ENCODE measurements at regions of chrX and their contacts with region 1.

Region 1: GRCh38 chrX:84729809-84730208 is 227.6 kb upstream of the HDX start:
- DNase-seq: no peak
- ATAC-seq: peak; percentile 80

Region 2: DNA sequence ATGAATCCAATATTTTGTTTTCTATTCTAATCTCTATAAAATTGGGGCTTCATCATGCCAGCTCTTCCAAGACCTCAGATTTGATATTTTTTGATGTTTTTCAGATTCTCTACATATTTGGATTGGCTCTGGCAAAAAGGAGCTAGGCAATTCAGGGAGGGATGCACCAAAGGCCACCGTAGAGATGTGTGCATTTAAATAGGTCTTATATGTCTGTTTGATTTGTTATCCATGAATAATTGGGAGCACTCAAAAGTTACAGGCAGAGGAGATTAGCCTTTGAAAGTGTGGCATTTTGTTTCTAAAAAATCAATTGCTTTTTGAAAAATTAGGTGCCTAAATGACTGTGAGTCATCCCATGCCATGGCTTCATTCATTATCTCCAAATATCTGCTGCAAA is 394.7 kb before region 1 on chrX:
- intact Hi-C with region 1: no loop called
- DNase-seq: no peak
- ATAC-seq: no peak

Region 3: DNA sequence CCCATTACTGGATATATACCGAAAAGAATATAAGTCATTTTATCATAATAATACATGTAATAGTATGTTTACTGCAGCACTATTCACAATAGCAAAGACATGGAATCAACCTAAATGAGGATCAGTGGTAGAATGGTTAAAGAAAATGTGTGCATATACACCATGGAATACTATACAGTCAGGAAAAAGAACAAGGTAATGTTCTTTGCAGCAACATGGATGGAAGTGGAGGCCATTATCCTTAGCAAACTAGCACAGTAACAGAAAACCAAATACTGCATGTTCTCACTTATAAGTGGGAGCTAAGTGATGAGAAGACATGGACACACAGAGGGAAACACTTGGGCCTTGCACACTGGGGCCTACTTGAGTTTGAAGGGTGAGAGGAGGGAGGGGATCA is 66.5 kb after region 1 on chrX:
- intact Hi-C with region 1: no loop called
- DNase-seq: no peak
- ATAC-seq: no peak

Region 4: GRCh38 chrX:84907324-84907968 is 177.6 kb after region 1 on chrX:
- intact Hi-C with region 1: loop called (anchors 10 kb)
- DNase-seq: no peak
- ATAC-seq: no peak